ENCODE measurements at regions of chr2 and their contacts with region 1.

Region 1: GRCh38 chr2:54704688-54705605 is 18.5 kb upstream of the EML6 start:
- DNase-seq: no peak
- H3K4me3 Mint-ChIP-seq: no peak overlapping the region
- H3K27ac Mint-ChIP-seq: no peak overlapping the region
- H3K4me1 Mint-ChIP-seq: peaks cover 8% of the 10 kb centered on the region
- H3K27me3 Mint-ChIP-seq: peaks cover 53% of the 10 kb centered on the region

Region 2: DNA sequence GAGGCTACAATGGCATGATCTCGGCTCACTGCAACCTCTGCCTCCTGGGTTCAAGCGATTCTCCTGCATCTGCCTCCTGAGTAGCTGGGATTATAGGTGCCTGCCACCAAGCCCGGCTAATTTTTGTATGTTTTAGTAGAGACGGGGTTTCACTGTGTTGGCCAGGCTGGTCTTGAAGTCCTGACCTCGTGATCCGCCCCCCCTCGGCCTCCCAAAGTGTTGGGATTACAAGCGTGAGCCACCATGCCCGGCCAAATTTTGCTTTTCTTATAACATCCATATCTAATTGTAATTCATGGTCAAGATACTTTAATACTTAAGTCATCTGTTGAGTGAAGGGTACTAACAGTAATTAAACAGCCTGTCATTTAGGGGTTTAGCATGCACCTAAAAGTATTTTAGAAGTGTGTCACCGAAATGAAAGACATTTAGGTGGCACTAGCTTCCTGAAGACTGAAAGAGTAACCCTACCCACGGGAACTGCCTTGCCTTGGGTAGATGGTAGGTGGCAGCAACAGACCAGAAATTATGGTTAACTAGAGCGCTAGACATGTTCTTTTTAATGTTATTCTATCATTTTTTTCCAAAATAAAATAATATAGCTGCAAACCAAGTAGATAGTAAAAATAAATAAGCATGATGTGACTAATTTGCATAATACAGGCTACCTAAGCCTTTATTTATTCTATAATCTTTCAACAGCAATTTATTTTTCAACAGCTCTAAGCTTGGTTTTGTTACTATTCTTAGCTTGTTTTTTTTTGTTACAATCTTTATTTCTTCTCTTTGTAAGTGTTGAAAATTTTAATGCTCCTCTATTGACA is 598.1 kb before region 1 on chr2:
- intact Hi-C with region 1: loop called (anchors 1 kb)
- DNase-seq: peak; percentile 11
- H3K4me3 Mint-ChIP-seq: no peak overlapping the region
- H3K27ac Mint-ChIP-seq: no peak overlapping the region
- H3K4me1 Mint-ChIP-seq: peaks cover 6% of the 10 kb centered on the region
- H3K27me3 Mint-ChIP-seq: peaks cover 8% of the 10 kb centered on the region

Region 3: DNA sequence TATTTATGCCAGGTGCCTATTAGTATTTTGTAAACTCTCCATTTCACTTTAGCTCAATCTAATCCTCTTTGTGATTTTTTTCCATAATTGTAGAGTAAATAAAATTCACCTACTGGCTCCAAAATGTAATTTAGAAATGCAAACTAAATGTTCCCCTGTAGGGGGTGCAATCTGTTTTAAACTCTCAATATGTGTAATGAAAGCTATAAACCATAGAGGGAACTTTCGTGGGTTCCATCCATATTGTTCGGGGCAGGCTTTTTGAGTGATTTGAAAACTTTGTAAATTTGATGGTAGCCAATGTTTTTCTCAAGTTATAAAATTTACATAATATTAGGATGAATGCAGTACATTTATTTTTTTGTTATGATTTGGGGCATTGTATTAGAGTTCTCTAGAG is 498.4 kb before region 1 on chr2:
- intact Hi-C with region 1: loop called (anchors 1 kb)
- DNase-seq: no peak
- H3K4me3 Mint-ChIP-seq: no peak overlapping the region
- H3K27ac Mint-ChIP-seq: no peak overlapping the region
- H3K4me1 Mint-ChIP-seq: no peaks in the 10 kb centered on the region
- H3K27me3 Mint-ChIP-seq: no peaks in the 10 kb centered on the region

Region 4: GRCh38 chr2:54657664-54658083 is 47.3 kb before region 1 on chr2:
- intact Hi-C with region 1: loop called (anchors 1 kb)
- DNase-seq: no peak
- H3K4me3 Mint-ChIP-seq: no peak overlapping the region
- H3K27ac Mint-ChIP-seq: no peak overlapping the region
- H3K4me1 Mint-ChIP-seq: peaks cover 20% of the 10 kb centered on the region
- H3K27me3 Mint-ChIP-seq: no peaks in the 10 kb centered on the region

Region 5: DNA sequence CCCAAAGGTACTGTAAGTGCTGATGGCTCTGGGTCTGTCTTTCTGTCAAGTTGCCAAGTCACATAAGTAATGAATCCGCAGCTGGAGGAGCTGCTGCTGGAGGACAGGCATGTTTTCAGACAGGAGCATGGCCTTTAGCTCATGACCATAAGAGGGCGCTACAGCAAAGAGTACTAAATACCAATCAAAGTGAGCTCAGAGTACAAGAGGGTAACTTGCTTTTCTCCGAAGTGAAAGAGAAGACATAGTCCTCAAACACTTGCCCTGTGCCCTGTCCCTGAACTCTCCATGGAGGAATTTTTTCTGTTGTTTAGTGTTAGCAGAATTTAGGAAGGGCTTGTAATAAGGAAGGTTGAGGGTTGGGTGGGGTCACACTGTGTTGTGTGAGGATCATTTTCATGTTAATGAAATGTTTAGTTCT is 39.5 kb before region 1 on chr2:
- intact Hi-C with region 1: loop called (anchors 1 kb)
- DNase-seq: peak; percentile 33
- H3K4me3 Mint-ChIP-seq: no peak overlapping the region
- H3K27ac Mint-ChIP-seq: no peak overlapping the region
- H3K4me1 Mint-ChIP-seq: peaks cover 20% of the 10 kb centered on the region
- H3K27me3 Mint-ChIP-seq: no peaks in the 10 kb centered on the region

Region 6: DNA sequence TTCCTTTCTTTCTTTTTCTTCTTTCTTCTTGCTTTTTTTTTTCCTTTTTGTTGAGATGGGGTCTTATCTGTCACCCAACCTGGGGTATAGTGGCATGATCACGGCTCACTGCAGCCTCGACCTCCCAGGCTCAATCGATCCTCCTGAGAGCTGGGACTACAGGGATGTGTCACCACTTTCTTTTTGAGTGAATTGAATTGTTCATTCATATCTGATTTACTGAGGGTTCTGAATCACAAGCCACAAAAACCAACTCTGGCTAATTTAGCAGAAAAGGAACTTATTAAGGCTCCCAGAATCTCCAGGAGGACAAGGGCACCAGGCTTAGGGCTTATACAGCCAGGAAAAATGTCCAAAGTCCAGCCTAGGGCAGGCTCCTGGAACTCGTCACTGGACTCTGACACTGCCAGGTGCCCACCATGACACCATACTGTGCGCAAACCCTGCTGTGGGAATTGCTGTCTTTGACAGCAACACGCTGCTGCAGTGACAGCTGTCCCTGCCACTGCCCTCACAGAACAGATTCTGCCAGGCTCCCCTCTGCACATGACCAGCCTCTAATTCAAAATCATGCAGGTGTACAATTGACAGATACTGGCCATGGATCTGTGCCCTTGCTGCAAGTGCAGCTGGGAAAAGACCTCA is 24.4 kb before region 1 on chr2:
- intact Hi-C with region 1: loop called (anchors 2 kb)
- DNase-seq: peak; percentile 39
- H3K4me3 Mint-ChIP-seq: peak overlapping the region; percentile 78
- H3K27ac Mint-ChIP-seq: peak overlapping the region; percentile 65
- H3K4me1 Mint-ChIP-seq: peaks cover 59% of the 10 kb centered on the region
- H3K27me3 Mint-ChIP-seq: peaks cover 33% of the 10 kb centered on the region

Region 7: GRCh38 chr2:54966165-54966832 is 261.4 kb after region 1 on chr2:
- intact Hi-C with region 1: no loop called
- DNase-seq: no peak
- H3K4me3 Mint-ChIP-seq: no peak overlapping the region
- H3K27ac Mint-ChIP-seq: no peak overlapping the region
- H3K4me1 Mint-ChIP-seq: peaks cover 27% of the 10 kb centered on the region
- H3K27me3 Mint-ChIP-seq: no peaks in the 10 kb centered on the region